CD8-positive, alpha-beta memory T cell (primary cell): ENCODE measurements at regions of chr9 and their contacts with region 1.

Region 1: DNA sequence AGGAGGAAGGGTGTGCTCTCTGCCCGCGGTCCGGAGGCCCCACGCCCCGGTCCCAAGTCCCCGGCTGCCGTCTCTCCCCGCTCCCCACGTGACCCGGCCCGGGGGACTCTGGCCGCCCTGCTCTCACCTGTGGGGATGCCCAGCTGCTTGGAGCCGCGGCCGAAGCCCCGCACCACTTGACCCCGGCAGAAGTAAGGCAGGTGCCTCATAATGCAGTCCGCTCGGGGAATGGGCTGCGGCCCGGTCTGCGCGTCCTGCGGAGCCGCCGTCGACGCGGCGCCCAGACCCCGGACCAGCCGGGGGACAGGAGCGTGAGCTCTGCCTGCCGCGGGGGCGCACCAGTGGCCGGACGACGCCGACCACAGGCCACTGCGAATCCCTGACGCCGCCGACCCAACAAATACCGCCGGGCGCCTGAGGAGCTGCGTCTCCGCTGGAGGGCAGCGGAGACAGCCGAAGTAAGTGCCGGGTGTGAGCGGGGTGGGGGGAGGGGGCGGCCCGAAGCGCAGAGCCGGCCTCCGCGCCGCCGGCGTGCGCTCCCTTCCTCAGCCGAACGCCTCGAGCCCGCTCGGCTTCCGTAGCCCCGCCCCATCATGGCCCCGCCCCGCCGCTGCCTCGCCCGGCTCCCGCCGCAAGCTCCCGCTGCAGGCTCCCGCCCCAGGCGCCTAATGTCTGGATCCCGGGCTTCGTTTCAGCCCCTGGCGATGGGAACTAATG is at the start of gene RFK:
- DNase-seq: peak; percentile 88 to 95 (median 92)
- H3K4me3 ChIP-seq: peak within 1 kb of the TSS; percentile 87
- H3K4me3 Mint-ChIP-seq: peak within 1 kb of the TSS; percentile 92 to 97 (median 95)
- H3K27ac ChIP-seq: peak within 1 kb of the TSS; percentile 89
- H3K27ac Mint-ChIP-seq: peak within 1 kb of the TSS; percentile 96 to 100 (median 98)
- H3K4me1 ChIP-seq: peaks cover 18% of the 10 kb centered on the region
- H3K4me1 Mint-ChIP-seq: peaks cover 28 to 43% (median 39%) of the 10 kb centered on the region in 3 donors
- H3K27me3 ChIP-seq: no peaks in the 10 kb centered on the region
- H3K27me3 Mint-ChIP-seq: no peaks in the 10 kb centered on the region
- total RNA-seq, gene RFK: 12.7 to 13.8 TPM

Region 2: GRCh38 chr9:76369583-76369982 is 24.5 kb before region 1 on chr9:
- CTCF ChIA-PET with region 1: no interaction called
- POLR2A ChIA-PET with region 1: no interaction called
- DNase-seq: no peak
- H3K4me3 ChIP-seq: no peak overlapping the region
- H3K4me3 Mint-ChIP-seq: no peak overlapping the region
- H3K27ac ChIP-seq: no peak overlapping the region
- H3K27ac Mint-ChIP-seq: no peak overlapping the region
- H3K4me1 ChIP-seq: no peaks in the 10 kb centered on the region
- H3K4me1 Mint-ChIP-seq: peaks cover 0 to 4% (median 2%) of the 10 kb centered on the region in 3 donors
- H3K27me3 ChIP-seq: no peaks in the 10 kb centered on the region
- H3K27me3 Mint-ChIP-seq: peaks cover 1 to 4% of the 10 kb centered on the region in 2 donors

Region 3: GRCh38 chr9:76704593-76705204 is 310.6 kb after region 1 on chr9:
- CTCF ChIA-PET with region 1: interaction called, 12 read pairs
- POLR2A ChIA-PET with region 1: no interaction called
- DNase-seq: peak in 2 of 5 donors; percentile 28 to 31
- H3K4me3 ChIP-seq: no peak overlapping the region
- H3K4me3 Mint-ChIP-seq: no peak overlapping the region
- H3K27ac ChIP-seq: no peak overlapping the region
- H3K27ac Mint-ChIP-seq: peak overlapping the region in 1 of 8 donors; percentile 35
- H3K4me1 ChIP-seq: peaks cover 4% of the 10 kb centered on the region
- H3K4me1 Mint-ChIP-seq: peaks cover 0 to 5% (median 0%) of the 10 kb centered on the region in 3 donors
- H3K27me3 ChIP-seq: no peaks in the 10 kb centered on the region
- H3K27me3 Mint-ChIP-seq: peaks cover 16 to 65% of the 10 kb centered on the region in 2 donors